Gastrocnemius medialis (tissue), 4 donors: ENCODE measurements at regions of chr2 and their contacts with region 1.

Region 1: DNA sequence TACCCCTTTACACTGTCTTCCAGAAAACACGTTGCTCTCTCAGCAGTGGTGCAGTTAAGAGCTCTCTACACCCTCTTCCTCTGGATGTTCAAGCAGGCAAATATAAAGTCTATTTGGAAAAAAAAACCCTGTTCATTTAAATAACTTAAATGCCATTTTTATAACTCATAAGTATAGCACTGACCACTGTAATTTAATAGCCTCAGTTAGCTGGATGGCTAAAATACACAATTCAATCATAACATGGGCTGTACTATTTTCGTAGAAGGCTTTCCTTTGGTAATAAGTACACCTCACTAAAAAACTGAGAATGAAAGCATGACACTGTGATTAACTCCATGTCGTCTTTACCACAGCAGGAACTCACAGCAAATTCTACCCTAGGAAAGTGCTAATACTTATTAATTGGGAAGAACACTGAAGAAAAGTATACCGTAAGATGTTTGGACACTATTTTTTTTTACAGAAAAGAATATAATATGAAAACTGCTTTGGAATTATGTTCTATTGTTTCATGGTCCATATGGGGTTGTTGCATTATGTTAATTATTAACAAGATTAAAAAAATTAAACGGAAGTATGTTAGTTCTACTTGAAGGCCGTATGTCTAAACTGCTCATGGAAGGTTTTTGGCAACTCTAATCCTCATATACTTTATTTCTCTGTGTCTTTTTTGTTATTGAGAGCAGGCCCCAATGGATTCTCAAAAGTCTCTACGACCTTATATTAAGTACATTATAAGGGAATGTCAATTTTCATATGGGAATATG is 269.1 kb downstream of the ZNF385B start:
- DNase-seq: no peak
- ATAC-seq: peak in 1 of 2 donors; percentile 15
- H3K4me3 ChIP-seq: peak overlapping the region in 3 of 4 donors; percentile 24 to 52 (median 44)
- H3K27ac ChIP-seq: peak overlapping the region; percentile 76 to 88 (median 82)
- H3K4me1 ChIP-seq: peaks cover 7 to 13% of the 10 kb centered on the region in 2 donors
- H3K27me3 ChIP-seq: no peaks in the 10 kb centered on the region
- CTCF ChIP-seq: no peak
- POLR2A ChIP-seq: no peak

Region 2: DNA sequence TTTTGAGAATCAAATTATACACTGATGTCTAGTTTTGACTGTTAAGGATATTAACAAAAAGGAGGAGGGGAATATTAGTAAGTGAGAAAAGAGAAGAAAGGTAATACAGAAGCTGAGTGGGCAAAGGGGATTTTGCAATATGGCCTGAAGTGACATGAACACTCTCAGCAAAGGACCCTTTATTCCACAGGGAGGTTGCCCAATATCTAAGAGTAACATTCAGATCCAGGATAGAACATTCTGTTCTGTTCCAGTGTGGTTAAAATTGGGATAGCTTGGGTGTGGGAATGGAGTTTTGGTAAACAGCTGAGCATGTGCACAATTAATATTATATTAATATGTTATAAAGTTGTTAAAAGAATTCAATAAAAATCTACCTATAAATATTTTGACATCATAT is 149.0 kb after region 1 on chr2:
- in situ Hi-C with region 1: no loop called
- intact Hi-C with region 1: loop called (anchors 5 kb)
- DNase-seq: peak; percentile 10 to 43
- ATAC-seq: peak; percentile 94 to 99
- H3K4me3 ChIP-seq: no peak overlapping the region
- H3K27ac ChIP-seq: peak overlapping the region in 3 of 4 donors; percentile 42 to 50 (median 49)
- H3K4me1 ChIP-seq: peaks cover 0 to 18% of the 10 kb centered on the region in 2 donors
- H3K27me3 ChIP-seq: no peaks in the 10 kb centered on the region
- CTCF ChIP-seq: no peak
- POLR2A ChIP-seq: no peak